MCF 10A (cell line): ENCODE measurements at regions of chr5 and their contacts with region 1.

Region 1: GRCh38 chr5:79133657-79134451 is 22.2 kb downstream of the BHMT start:
- DNase-seq: peak; percentile 84
- H3K4me3 Mint-ChIP-seq: peak overlapping the region; percentile 63
- H3K27ac Mint-ChIP-seq: peak overlapping the region; percentile 72
- H3K4me1 Mint-ChIP-seq: peaks cover 12% of the 10 kb centered on the region
- H3K27me3 Mint-ChIP-seq: no peaks in the 10 kb centered on the region
- CTCF ChIP-seq: peak; percentile 72

Region 2: DNA sequence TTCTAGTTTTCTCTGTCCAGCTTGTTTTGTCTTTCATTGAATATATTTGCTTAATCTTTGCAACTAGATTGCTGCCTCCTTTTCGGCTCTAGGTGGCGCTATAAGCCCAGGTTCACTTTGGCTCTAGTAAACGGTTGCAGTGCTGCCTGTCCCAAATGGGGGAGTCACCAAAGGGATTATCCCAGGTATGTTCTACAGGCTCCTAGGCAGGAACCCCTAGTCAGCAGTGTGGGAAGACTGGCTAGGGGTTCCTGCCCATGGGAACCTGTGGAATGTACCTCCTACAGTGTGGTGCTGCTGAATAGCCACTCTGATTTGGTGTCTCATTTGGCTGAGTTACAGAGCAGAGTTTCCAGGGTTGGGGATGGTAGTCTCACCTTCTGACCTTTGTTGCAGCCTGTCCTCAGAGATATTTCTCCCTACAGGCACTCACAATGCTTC is 233.9 kb before region 1 on chr5:
- CTCF ChIA-PET with region 1: interaction called, 3 read pairs
- POLR2A ChIA-PET with region 1: no interaction called
- intact Hi-C with region 1: loop called (anchors 1 kb)
- DNase-seq: peak; percentile 71
- H3K4me3 Mint-ChIP-seq: no peak overlapping the region
- H3K27ac Mint-ChIP-seq: no peak overlapping the region
- H3K4me1 Mint-ChIP-seq: no peaks in the 10 kb centered on the region
- H3K27me3 Mint-ChIP-seq: no peaks in the 10 kb centered on the region
- CTCF ChIP-seq: peak; percentile 68

Region 3: DNA sequence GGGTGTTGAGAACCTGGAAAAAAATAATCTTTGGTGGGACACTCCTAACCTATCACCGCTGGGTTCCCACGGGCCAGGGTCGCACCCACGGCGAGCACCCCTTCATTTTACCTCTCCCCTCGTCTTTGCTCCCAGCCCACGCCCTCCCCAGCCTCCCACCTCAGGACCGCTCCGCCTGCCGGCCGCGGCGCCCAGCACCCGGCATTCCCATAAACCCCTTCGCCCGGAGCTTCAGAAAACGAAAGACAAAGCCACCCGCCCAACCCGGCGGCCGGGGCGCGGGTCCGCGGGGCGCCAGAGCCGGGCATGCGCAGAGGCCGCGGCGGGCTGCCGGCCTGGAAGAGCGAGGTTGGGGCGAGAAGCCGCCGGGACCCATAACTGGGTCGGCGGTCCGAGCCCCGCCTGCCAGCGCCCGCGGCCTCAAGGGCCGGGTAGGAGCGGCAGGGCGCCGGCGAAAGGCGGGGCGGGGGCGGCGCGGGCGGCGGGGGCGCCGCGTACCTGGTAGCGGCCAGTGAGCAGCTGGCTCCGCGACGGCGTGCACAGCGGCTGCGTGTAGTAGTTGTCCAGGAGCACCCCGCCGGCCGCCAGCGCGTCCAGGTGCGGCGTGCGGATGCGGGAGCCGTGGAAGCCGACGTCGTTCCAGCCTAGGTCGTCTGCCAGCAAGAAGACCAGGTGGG is 149.3 kb before region 1 on chr5:
- CTCF ChIA-PET with region 1: interaction called, 25 read pairs
- POLR2A ChIA-PET with region 1: interaction called, 15 read pairs
- intact Hi-C with region 1: loop called (anchors 2 kb)
- DNase-seq: peak; percentile 85
- H3K4me3 Mint-ChIP-seq: peak overlapping the region; percentile 83
- H3K27ac Mint-ChIP-seq: peak overlapping the region; percentile 42
- H3K4me1 Mint-ChIP-seq: peaks cover 7% of the 10 kb centered on the region
- H3K27me3 Mint-ChIP-seq: no peaks in the 10 kb centered on the region
- CTCF ChIP-seq: peak; percentile 25

Region 4: GRCh38 chr5:79157305-79157704 is 23.5 kb after region 1 on chr5:
- CTCF ChIA-PET with region 1: interaction called, 11 read pairs
- POLR2A ChIA-PET with region 1: no interaction called
- intact Hi-C with region 1: no loop called
- DNase-seq: no peak
- H3K4me3 Mint-ChIP-seq: no peak overlapping the region
- H3K27ac Mint-ChIP-seq: no peak overlapping the region
- H3K4me1 Mint-ChIP-seq: peaks cover 9% of the 10 kb centered on the region
- H3K27me3 Mint-ChIP-seq: no peaks in the 10 kb centered on the region
- CTCF ChIP-seq: no peak

Region 5: DNA sequence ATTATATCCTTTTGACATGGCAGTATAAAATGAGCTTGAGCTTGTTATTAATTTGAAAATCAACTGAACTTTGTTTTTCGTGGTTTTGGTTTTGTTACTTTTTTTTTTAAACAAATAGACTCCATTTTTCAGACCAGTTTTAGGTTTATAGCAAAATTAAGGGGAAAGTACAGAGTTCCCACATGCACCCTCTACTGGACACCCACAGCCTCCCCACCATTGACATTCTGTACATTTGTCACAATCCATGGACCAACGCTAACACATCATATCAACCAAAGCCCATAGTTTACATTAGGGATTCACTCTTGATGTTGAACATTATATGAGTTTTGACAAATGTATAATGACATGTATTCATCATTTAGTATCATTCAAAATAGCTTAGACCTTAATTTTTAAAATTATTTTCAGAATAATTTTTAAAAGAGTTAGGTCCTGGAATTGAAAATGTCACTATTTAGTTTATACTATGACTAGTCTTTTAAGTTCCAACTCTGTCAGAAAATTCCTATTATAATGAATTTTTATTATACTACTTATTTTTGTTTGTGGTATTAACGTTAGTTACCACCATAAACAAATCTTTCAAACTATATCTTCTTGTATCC is 66.8 kb after region 1 on chr5:
- CTCF ChIA-PET with region 1: interaction called, 11 read pairs
- POLR2A ChIA-PET with region 1: no interaction called
- intact Hi-C with region 1: no loop called
- DNase-seq: peak; percentile 29
- H3K4me3 Mint-ChIP-seq: no peak overlapping the region
- H3K27ac Mint-ChIP-seq: no peak overlapping the region
- H3K4me1 Mint-ChIP-seq: peaks cover 12% of the 10 kb centered on the region
- H3K27me3 Mint-ChIP-seq: no peaks in the 10 kb centered on the region
- CTCF ChIP-seq: no peak

Region 6: DNA sequence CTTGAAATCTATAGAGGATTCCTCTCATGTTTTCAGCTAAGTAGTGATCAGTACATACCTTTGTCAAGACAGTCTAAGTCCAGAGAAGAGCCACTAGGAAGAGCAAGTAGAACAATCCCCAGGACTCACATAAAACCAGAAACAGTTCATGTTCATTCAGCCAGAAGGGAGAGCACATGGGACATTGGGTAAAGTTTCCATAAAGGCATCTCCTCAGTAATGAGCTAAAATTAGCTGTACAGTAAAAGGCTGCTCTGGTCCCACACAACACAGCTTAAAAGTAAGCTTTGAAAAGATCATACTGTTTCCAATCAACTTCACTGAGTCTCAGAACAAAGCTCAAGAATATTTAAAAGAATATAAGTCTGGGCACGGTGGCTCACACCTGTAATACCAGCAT is 347.7 kb after region 1 on chr5:
- CTCF ChIA-PET with region 1: interaction called, 12 read pairs
- POLR2A ChIA-PET with region 1: interaction called, 3 read pairs
- intact Hi-C with region 1: no loop called
- DNase-seq: no peak
- H3K4me3 Mint-ChIP-seq: no peak overlapping the region
- H3K27ac Mint-ChIP-seq: no peak overlapping the region
- H3K4me1 Mint-ChIP-seq: no peaks in the 10 kb centered on the region
- H3K27me3 Mint-ChIP-seq: no peaks in the 10 kb centered on the region
- CTCF ChIP-seq: no peak